ENCODE measurements at regions of chr14 and their contacts with region 1.

Region 1: GRCh38 chr14:73753959-73754882 is 40.0 kb upstream of the PNMA1 start:
- DNase-seq: peak; percentile 47
- H3K4me3 Mint-ChIP-seq: peak overlapping the region; percentile 90
- H3K27ac Mint-ChIP-seq: peak overlapping the region; percentile 96
- H3K4me1 Mint-ChIP-seq: peaks cover 94% of the 10 kb centered on the region
- H3K27me3 Mint-ChIP-seq: no peaks in the 10 kb centered on the region

Region 2: DNA sequence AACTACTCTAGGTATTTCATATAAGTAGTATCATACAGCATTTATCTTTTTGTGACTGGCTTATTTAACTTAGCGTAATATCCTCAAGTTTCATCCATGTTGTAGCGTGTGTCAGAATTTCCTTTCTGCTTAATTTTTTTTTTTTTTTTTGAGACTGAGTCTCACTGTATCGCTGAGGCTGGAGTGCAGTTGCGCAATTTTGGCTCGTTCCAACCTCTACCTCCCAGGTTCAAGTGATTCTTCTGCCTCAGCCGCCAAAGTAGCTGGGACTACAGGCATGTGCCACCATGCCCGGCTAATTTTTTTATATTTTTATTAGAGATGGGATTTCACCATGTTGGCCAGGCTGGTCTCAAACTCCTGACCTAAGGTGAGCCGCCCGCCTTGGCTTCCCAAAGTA is 68.9 kb before region 1 on chr14:
- intact Hi-C with region 1: no loop called
- DNase-seq: no peak
- H3K4me3 Mint-ChIP-seq: no peak overlapping the region
- H3K27ac Mint-ChIP-seq: no peak overlapping the region
- H3K4me1 Mint-ChIP-seq: no peaks in the 10 kb centered on the region
- H3K27me3 Mint-ChIP-seq: no peaks in the 10 kb centered on the region

Region 3: DNA sequence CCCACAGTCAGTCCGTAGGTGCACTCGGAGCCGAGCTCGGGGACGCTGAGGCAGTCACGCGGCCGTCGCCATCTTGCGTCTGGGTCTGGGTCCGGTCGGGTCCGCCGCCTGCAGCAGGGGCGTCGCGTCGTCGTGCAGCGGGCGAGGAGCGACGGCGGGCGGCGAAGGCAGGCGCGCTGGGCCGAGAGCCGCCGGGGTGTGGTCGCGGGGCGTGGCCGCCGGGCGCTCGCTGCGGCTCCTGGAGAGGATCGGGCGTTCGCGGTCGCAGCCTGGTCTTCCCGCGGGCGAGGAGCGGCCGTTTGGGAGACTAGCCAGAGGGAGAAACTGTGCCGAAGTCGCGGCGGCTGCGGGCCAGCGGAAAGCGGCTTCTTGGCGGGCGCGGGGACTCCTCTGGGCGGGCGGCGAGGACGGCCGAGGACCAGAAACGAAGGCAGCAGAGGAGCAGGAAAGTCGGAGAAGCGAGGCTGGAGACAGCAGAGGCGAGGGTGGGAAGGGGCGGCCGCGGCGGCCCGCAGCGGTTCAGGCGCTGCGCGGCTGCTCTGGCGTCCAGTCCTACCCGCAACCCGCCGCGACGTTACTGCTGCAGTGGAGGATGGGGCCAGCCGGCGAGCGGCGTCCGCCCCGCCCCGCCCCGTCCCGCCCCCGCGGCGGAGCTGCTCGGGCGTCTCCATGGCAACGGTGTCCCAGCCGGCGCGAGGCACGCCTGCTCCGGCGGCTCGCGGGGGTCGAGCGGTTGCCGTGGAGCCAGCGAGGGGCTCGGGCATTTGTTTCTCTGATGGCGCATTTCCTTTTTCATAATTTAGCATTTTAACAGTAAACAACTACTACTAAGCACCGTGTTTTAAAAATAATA is 40.2 kb before region 1 on chr14 and contains the start of gene PNMA1:
- intact Hi-C with region 1: no loop called
- DNase-seq: peak; percentile 86
- H3K4me3 Mint-ChIP-seq: peak within 1 kb of the TSS; percentile 87
- H3K27ac Mint-ChIP-seq: peak within 1 kb of the TSS; percentile 92
- H3K4me1 Mint-ChIP-seq: peaks cover 30% of the 10 kb centered on the region
- H3K27me3 Mint-ChIP-seq: no peaks in the 10 kb centered on the region
- total RNA-seq, gene PNMA1: 29.7 and 30.6 TPM in 2 replicates

Region 4: GRCh38 chr14:73741386-73741875 is 12.8 kb before region 1 on chr14:
- intact Hi-C with region 1: loop called (anchors 1 kb)
- DNase-seq: peak; percentile 61
- H3K4me3 Mint-ChIP-seq: peak overlapping the region; percentile 83
- H3K27ac Mint-ChIP-seq: peak overlapping the region; percentile 86
- H3K4me1 Mint-ChIP-seq: peaks cover 62% of the 10 kb centered on the region
- H3K27me3 Mint-ChIP-seq: no peaks in the 10 kb centered on the region

Region 5: DNA sequence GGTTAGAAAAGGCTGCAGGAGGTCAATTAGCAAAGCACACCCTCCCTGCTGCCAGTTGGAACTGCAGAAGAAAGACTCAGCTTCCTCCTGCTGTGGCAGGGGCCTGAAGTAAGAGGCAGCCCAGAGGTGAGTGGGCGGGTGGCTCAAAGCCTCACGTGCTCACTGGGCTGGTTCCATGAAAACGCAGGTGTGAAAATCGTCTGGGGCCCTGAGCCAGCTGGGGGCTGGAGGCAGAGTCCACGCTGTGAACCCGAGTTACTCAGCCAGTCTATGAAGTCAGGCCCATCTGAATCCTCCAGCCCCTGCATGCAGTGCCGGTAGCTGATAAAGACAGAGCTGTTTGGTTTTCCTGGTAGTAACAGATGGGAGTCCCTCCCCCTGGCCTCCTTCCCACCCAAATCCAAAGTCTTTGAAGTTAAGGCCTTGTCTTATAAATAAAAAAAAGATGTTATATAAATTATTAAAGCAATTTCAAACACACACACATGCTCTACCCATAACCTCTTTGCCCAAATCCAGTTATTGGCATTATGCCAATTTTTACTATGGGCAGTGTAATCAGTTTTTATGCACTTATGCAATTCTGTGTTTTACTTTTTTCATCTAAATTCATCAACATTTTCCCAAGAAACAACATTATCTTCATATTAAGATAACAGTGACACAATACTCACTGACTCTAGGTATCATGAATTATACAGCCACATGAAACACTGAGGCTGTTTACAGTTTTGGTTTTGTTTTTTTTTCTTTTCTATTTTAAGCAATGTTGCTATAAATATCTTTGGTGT is 17.8 kb after region 1 on chr14:
- intact Hi-C with region 1: loop called (anchors 2 kb)
- DNase-seq: peak; percentile 56
- H3K4me3 Mint-ChIP-seq: peak overlapping the region; percentile 48
- H3K27ac Mint-ChIP-seq: peak overlapping the region; percentile 67
- H3K4me1 Mint-ChIP-seq: peaks cover 60% of the 10 kb centered on the region
- H3K27me3 Mint-ChIP-seq: no peaks in the 10 kb centered on the region

Measured in activated T-helper 1 cell treated with anti-CD3 and anti-CD28 coated beads, Interleukin-12 subunit alpha, Interleukin-12 subunit beta, Interleukin-2, Interleukin-4 antibody, amounts not matched to agents 30 ng/mL and 10 ng/mL and 1 ng/mL, durations not matched to agents 14 hours and 24 hours and 36 hours (primary cell).